ENCODE measurements at regions of chr12 and their contacts with region 1.

Region 1: GRCh38 chr12:52865090-52865944 is 16.5 kb upstream of the KRT78 start:
- DNase-seq: peak; percentile 68 to 87 (median 82)
- ATAC-seq: peak; percentile 84 to 97 (median 94)
- H3K4me3 ChIP-seq: no peak overlapping the region
- H3K27ac ChIP-seq: no peak overlapping the region
- H3K4me1 ChIP-seq: no peaks in the 10 kb centered on the region
- H3K27me3 ChIP-seq: no peaks in the 10 kb centered on the region
- CTCF ChIP-seq: peak; percentile 69 to 74 (median 74)

Region 2: GRCh38 chr12:52147367-52147972 is 717.8 kb before region 1 on chr12:
- intact Hi-C with region 1: loop called in 1 of 3 experiments (anchors 5 kb)
- DNase-seq: peak in 5 of 6 donors; percentile 73 to 90 (median 81)
- ATAC-seq: peak; percentile 66 to 81 (median 74)
- H3K4me3 ChIP-seq: no peak overlapping the region
- H3K27ac ChIP-seq: peak overlapping the region; percentile 67 to 88 (median 82)
- H3K4me1 ChIP-seq: peaks cover 0 to 6% (median 3%) of the 10 kb centered on the region in 3 donors
- H3K27me3 ChIP-seq: no peaks in the 10 kb centered on the region
- CTCF ChIP-seq: no peak

Region 3: GRCh38 chr12:52372216-52373154 is 492.8 kb before region 1 on chr12:
- intact Hi-C with region 1: loop called in 2 of 3 experiments (anchors 5 to 10 kb)
- DNase-seq: peak; percentile 72 to 90 (median 84)
- ATAC-seq: peak; percentile 95 to 98 (median 97)
- H3K4me3 ChIP-seq: no peak overlapping the region
- H3K27ac ChIP-seq: no peak overlapping the region
- H3K4me1 ChIP-seq: no peaks in the 10 kb centered on the region
- H3K27me3 ChIP-seq: no peaks in the 10 kb centered on the region
- CTCF ChIP-seq: peak; percentile 38 to 69 (median 53)

Region 4: DNA sequence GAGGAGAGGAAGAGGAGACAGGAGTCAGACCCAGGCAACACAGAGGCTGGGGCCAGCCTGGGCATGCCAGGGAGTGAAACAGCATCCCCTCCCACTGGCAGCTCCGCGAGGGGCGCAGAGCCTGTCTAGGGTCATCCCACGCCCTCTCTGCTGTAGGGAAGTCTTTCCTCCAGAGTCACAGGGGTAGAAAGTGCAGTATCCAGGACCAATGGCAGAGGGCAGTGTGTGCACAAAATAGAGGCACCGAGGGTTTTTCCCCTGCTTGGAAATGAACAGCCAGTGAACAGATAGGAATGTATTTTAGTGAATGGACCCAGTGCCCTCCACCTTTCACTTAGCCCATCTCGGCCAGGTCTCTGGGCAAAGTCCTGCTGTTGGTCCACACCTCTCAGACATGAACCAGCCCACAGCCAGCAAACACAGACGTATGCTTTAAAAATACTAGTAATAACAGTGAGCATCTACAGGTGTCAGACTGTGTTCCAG is 282.3 kb before region 1 on chr12:
- intact Hi-C with region 1: loop called in 2 of 3 experiments (anchors 5 to 10 kb)
- DNase-seq: peak in 4 of 6 donors; percentile 28 to 74 (median 42)
- ATAC-seq: peak; percentile 76 to 97 (median 94)
- H3K4me3 ChIP-seq: no peak overlapping the region
- H3K27ac ChIP-seq: no peak overlapping the region
- H3K4me1 ChIP-seq: no peaks in the 10 kb centered on the region
- H3K27me3 ChIP-seq: no peaks in the 10 kb centered on the region
- CTCF ChIP-seq: peak; percentile 14 to 55 (median 48)

Region 5: DNA sequence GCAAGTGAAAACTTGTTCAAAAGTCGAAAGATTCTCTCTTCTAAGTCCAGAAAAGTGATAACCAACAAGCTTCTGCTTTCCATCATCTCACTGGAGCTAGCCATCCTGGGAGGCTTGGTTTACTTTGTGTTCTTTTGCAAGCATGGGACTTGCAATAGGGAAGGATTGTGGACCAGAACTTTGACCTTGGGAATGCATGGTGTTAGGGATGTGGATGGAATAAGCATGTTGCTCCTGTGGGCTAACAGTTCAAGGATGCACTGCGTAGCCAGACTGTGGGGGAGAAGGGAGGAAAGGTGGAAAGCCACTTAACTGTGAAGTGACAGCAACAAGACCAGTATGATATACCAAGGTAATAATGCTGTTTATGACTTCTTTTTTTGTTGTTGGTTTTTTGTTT is 266.5 kb after region 1 on chr12:
- intact Hi-C with region 1: no loop called
- DNase-seq: no peak
- ATAC-seq: no peak
- H3K4me3 ChIP-seq: no peak overlapping the region
- H3K27ac ChIP-seq: no peak overlapping the region
- H3K4me1 ChIP-seq: no peaks in the 10 kb centered on the region
- H3K27me3 ChIP-seq: no peaks in the 10 kb centered on the region
- CTCF ChIP-seq: no peak